CD4-positive, alpha-beta T cell (primary cell): ENCODE measurements at regions of chr9 and their contacts with region 1.

Region 1: DNA sequence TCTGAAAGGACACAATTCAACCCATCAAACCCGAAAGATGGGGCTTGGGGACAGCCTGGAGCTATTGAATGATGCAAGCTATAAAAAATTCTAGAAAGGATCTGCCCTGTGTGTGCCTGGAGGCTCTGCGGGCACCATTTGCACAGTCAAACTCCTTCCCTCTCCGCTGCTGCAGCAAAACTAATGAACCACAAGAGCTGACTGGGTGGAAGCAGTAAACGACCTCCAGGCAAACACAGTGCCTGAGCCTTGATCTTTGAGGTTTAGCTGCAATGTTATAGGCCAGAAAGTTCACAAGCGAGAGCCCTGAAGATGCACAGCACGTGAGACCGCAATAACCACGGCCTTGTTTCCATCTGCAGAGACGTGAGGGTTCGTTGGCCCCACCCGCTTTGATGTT is 69.2 kb upstream of the S1PR3 start:
- DNase-seq: peak; percentile 15 to 81 (median 36)
- ATAC-seq: peak; percentile 88
- H3K4me3 ChIP-seq: no peak overlapping the region
- H3K4me3 Mint-ChIP-seq: peak overlapping the region; percentile 75
- H3K27ac ChIP-seq: no peak overlapping the region
- H3K27ac Mint-ChIP-seq: peak overlapping the region; percentile 54
- H3K4me1 ChIP-seq: peaks cover 34% of the 10 kb centered on the region
- H3K4me1 Mint-ChIP-seq: peaks cover 61% of the 10 kb centered on the region
- H3K27me3 ChIP-seq: no peaks in the 10 kb centered on the region
- H3K27me3 Mint-ChIP-seq: no peaks in the 10 kb centered on the region
- CTCF ChIP-seq: no peak

Region 2: GRCh38 chr9:88835038-88835466 is 87.0 kb before region 1 on chr9:
- CTCF ChIA-PET with region 1: no interaction called
- POLR2A ChIA-PET with region 1: interaction called, 3 read pairs
- intact Hi-C with region 1: loop called (anchors 1 to 5 kb)
- DNase-seq: peak in 3 of 14 experiments; percentile 64 to 75 (median 70)
- ATAC-seq: peak; percentile 96
- H3K4me3 ChIP-seq: no peak overlapping the region
- H3K4me3 Mint-ChIP-seq: peak overlapping the region; percentile 40
- H3K27ac ChIP-seq: no peak overlapping the region
- H3K27ac Mint-ChIP-seq: peak overlapping the region; percentile 53
- H3K4me1 ChIP-seq: peaks cover 15% of the 10 kb centered on the region
- H3K4me1 Mint-ChIP-seq: peaks cover 38% of the 10 kb centered on the region
- H3K27me3 ChIP-seq: peaks cover 45 to 75% of the 10 kb centered on the region in 2 experiments
- H3K27me3 Mint-ChIP-seq: peaks cover 87% of the 10 kb centered on the region
- CTCF ChIP-seq: no peak